ENCODE measurements at regions of chr20 and their contacts with region 1.

Region 1: GRCh38 chr20:35146920-35147574 is at the start of gene EDEM2:
- DNase-seq: peak; percentile 96
- ATAC-seq: peak; percentile 91
- H3K4me3 Mint-ChIP-seq: peak within 1 kb of the TSS; percentile 99
- H3K27ac Mint-ChIP-seq: peak within 1 kb of the TSS; percentile 79
- H3K4me1 Mint-ChIP-seq: peaks cover 29% of the 10 kb centered on the region
- H3K27me3 Mint-ChIP-seq: no peaks in the 10 kb centered on the region
- total RNA-seq, gene EDEM2: 19.5 to 19.6 TPM

Region 2: DNA sequence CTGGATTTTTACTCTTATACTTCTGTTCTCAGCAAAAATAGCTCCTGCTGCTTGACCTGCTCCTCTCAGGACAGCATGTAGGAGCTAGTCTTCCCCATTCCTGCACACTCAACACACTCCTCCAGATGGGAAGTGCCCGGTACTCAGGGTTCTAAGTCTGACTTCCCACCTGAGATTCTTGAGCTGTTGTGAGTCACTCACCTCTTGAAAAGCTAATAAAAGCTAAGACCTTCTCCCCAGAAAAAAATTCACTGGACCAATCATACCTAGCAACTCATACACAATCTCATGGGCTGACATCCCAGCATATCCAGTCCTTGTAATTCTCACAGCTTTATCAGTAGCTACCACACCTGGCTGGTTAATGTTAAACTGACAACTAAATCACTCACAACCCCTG is 107.9 kb before region 1 on chr20:
- CTCF ChIA-PET with region 1: no interaction called
- POLR2A ChIA-PET with region 1: no interaction called
- DNase-seq: no peak
- ATAC-seq: no peak
- H3K4me3 Mint-ChIP-seq: no peak overlapping the region
- H3K27ac Mint-ChIP-seq: no peak overlapping the region
- H3K4me1 Mint-ChIP-seq: no peaks in the 10 kb centered on the region
- H3K27me3 Mint-ChIP-seq: no peaks in the 10 kb centered on the region

Region 3: DNA sequence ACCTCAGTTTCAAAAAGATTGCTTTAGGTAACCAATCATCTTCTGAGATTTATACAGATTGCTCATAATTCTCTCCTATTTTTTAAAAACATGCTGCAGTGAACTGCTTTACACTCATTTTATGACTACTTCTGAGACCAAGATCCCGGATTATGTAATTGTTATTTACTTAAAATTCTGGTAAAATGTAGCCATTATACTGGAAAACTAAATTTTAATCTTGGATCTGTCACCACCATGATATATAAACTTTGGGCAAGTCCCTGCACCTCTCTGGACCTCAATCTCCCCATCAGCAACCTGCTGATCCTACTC is 24.3 kb after region 1 on chr20:
- CTCF ChIA-PET with region 1: interaction called, 10 read pairs
- POLR2A ChIA-PET with region 1: no interaction called
- DNase-seq: no peak
- ATAC-seq: no peak
- H3K4me3 Mint-ChIP-seq: peak overlapping the region; percentile 67
- H3K27ac Mint-ChIP-seq: no peak overlapping the region
- H3K4me1 Mint-ChIP-seq: peaks cover 20% of the 10 kb centered on the region
- H3K27me3 Mint-ChIP-seq: no peaks in the 10 kb centered on the region

Region 4: DNA sequence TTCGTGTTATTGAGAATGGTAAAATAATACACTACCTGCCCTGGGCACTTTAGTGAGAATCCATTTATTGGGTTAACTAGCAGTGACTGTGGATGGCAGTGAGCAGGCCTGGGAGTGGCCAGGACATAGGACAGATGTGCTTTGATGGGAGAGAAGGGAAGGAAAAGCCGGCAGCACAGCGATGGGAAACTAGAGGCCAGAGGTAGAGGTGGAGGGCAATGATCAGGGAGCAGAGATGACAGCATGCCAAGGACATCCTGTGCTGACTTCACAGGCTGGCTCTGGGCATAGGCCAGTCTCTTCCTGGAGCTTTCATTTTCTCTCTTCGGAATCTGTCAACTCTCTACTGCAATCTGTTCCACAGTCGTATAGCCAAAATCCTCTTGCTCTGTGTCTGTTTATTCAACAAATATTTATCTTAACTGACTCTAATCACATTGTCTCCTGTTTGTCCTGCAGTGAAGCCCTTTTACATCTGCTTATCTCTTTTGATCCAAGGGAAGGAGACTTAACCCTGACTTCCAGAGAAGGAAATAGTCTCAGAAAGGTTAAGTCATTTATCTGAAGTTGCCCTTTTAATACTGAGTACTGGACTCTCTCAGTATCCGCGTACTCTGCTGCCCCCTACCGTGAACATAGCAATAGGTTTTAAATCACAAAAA is 61.0 kb after region 1 on chr20:
- CTCF ChIA-PET with region 1: interaction called, 45 read pairs
- POLR2A ChIA-PET with region 1: interaction called, 3 read pairs
- DNase-seq: peak; percentile 88
- ATAC-seq: peak; percentile 94
- H3K4me3 Mint-ChIP-seq: no peak overlapping the region
- H3K27ac Mint-ChIP-seq: no peak overlapping the region
- H3K4me1 Mint-ChIP-seq: no peaks in the 10 kb centered on the region
- H3K27me3 Mint-ChIP-seq: no peaks in the 10 kb centered on the region

Region 5: GRCh38 chr20:35277531-35278395 is 130.7 kb after region 1 on chr20 and contains the start of gene MMP24OS:
- CTCF ChIA-PET with region 1: interaction called, 29 read pairs
- POLR2A ChIA-PET with region 1: interaction called, 10 read pairs
- DNase-seq: peak; percentile 94
- ATAC-seq: peak; percentile 91
- H3K4me3 Mint-ChIP-seq: peak within 1 kb of the TSS; percentile 95
- H3K27ac Mint-ChIP-seq: peak within 1 kb of the TSS; percentile 99
- H3K4me1 Mint-ChIP-seq: peaks cover 35% of the 10 kb centered on the region
- H3K27me3 Mint-ChIP-seq: no peaks in the 10 kb centered on the region
- total RNA-seq, gene MMP24OS: 42.0 to 43.1 TPM

Region 6: DNA sequence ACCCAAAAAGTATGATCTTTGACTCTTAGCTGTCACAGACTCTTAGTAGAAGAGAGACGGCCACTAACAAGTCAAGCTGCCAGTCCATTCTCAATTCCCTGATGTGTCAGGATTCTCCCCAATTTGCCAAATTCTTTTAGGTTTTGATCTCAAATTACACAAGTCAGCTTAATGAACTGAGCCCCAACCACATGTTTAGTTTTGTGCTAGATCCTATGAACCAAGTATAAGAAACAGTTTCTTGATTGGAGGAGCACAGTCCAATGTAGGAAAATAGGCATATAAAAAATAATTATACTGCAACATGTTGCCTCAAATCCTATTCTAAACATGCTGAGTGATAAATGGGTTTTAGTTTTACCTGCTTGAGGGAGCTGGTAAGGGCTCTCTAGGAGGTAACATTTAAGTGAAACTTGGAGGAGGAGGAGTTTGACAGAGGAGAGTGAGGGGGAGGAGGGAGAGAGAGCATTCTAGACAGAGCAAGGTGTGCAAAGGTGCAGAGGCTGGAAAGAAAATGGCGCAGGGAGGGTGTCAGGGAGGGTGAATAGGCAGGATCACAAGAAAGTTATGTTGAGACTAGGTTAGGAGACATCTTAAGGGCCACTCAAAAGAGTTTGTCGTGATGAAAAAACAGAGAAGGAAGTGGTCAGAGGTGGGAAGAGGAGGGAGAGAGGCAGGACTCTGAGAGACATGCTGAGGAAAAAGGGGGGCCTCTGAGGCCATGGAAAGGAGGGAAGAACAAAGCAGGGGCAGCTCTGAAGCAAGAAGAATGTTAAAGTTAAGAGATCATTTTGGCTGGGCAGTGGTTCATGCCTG is 168.0 kb after region 1 on chr20:
- CTCF ChIA-PET with region 1: no interaction called
- POLR2A ChIA-PET with region 1: no interaction called
- DNase-seq: no peak
- ATAC-seq: peak; percentile 58
- H3K4me3 Mint-ChIP-seq: no peak overlapping the region
- H3K27ac Mint-ChIP-seq: peak overlapping the region; percentile 75
- H3K4me1 Mint-ChIP-seq: peaks cover 53% of the 10 kb centered on the region
- H3K27me3 Mint-ChIP-seq: no peaks in the 10 kb centered on the region

Measured in activated CD8-positive, alpha-beta T cell treated with anti-CD3 and anti-CD28 coated beads, Interleukin-2, amount 10 ng/mL, durations not matched to agents 7 days and 5 days (primary cell).